Mammary epithelial cell (primary cell): ENCODE measurements at regions of chr12 and their contacts with region 1.

Region 1: GRCh38 chr12:64877363-64878004 is 53.0 kb downstream of the TBC1D30 start:
- DNase-seq: no peak
- H3K4me3 ChIP-seq: no peak overlapping the region
- H3K27ac ChIP-seq: no peak overlapping the region
- H3K4me1 ChIP-seq: no peaks in the 10 kb centered on the region
- H3K27me3 ChIP-seq: peaks cover 7% of the 10 kb centered on the region
- CTCF ChIP-seq: no peak

Region 2: GRCh38 chr12:64522316-64522715 is 355.2 kb before region 1 on chr12:
- CTCF ChIA-PET with region 1: no interaction called
- dilution Hi-C with region 1: no loop called
- in situ Hi-C with region 1: no loop called
- intact Hi-C with region 1: no loop called
- DNase-seq: peak; percentile 1
- H3K4me3 ChIP-seq: no peak overlapping the region
- H3K27ac ChIP-seq: no peak overlapping the region
- H3K4me1 ChIP-seq: peaks cover 8% of the 10 kb centered on the region
- H3K27me3 ChIP-seq: no peaks in the 10 kb centered on the region
- CTCF ChIP-seq: no peak

Region 3: DNA sequence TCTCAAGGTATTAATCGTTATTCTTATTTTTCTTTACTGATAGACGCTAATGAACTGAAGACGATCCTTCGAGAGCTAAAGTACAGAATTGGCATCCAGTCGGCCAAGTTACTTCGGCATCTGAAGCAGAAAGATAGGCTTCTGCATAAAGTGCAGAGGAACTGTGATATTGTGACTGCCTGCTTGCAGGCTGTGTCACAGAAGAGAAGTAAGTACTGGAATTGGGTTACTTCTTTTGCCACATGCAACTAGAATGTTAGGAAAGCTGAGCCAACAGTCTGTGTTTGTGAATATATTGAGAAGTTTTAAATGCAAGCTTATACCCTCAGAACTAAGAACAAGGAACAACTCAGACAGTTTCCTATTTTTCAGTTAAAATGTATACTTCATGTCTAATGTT is 91.6 kb before region 1 on chr12:
- CTCF ChIA-PET with region 1: no interaction called
- dilution Hi-C with region 1: loop called (anchors 5 kb)
- in situ Hi-C with region 1: no loop called
- intact Hi-C with region 1: no loop called
- DNase-seq: no peak
- H3K4me3 ChIP-seq: no peak overlapping the region
- H3K27ac ChIP-seq: no peak overlapping the region
- H3K4me1 ChIP-seq: peaks cover 5% of the 10 kb centered on the region
- H3K27me3 ChIP-seq: peaks cover 23% of the 10 kb centered on the region
- CTCF ChIP-seq: no peak

Region 4: DNA sequence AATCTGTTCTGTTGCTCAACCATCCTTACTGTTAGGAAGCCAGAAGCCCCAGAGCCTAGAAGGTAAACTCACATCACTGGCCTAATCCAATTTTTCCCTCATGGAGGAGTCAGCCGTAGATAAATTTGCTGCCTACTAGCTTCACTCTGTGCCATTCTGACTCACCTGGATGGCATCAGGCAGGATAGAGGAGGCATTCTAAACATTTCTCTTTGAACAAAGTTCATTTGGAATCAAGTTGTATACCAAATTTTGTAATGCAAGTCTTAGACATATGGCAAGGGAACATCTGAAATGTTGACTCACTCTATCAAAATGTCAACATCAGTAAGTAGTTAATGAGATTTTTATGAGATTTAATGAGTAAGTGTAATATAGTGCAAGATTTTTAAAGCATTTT is 66.7 kb before region 1 on chr12:
- CTCF ChIA-PET with region 1: no interaction called
- dilution Hi-C with region 1: no loop called
- in situ Hi-C with region 1: no loop called
- intact Hi-C with region 1: no loop called
- DNase-seq: no peak
- H3K4me3 ChIP-seq: no peak overlapping the region
- H3K27ac ChIP-seq: no peak overlapping the region
- H3K4me1 ChIP-seq: no peaks in the 10 kb centered on the region
- H3K27me3 ChIP-seq: peaks cover 1% of the 10 kb centered on the region
- CTCF ChIP-seq: no peak